HEK293 (cell line): ENCODE measurements at regions of chr15 and their contacts with region 1.

Region 1: GRCh38 chr15:84616235-84616634 is 15.4 kb downstream of the ZSCAN2 start:
- H3K4me3 ChIP-seq: no peak overlapping the region
- H3K27ac ChIP-seq: no peak overlapping the region
- H3K4me1 ChIP-seq: no peaks in the 10 kb centered on the region
- CTCF ChIP-seq: no peak

Region 2: DNA sequence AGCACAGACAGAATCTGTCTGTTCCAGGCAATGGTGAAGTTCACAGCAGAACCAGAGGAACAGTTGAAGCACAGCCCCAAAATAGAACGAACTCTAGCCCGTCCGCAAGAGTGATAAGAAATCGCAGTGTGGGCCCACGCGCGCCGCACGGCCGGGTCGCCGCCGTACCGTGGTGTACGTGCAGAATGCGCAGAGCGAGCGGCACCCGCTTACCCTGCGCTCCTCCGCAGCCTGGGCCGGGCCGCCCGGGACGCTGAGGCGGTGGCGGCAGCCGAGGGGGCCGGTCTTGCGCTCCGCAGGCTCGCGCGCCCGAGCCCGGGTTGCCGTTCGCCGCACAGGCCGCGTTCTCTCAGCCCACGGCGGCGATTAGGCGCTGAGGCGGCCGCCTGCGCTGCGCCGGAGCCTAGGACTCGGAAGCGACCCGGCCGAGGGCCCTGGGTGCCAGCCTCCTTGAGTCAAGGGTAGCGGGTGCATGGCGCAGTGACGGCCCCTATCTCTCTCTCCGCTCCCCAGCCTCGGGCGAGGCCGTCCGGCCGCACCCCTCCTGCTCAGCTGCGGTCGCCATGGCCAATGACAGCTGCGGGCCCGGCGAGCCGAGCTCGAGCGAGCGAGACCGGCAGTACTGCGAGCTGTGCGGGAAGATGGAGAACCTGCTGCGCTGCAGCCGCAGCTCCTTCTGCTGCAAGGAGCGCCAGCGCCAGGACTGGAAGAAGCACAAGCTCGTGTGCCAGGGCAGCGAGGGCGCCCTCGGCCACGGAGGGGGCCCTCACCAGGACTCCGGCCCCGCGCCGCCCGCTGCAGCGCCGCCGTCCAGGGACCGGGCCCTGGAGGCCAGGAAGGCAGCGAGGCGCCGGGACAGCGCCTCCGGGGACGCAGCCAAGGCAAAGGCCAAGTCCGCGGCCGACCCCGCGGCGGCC is 17.3 kb after region 1 on chr15:
- CTCF ChIA-PET with region 1: no interaction called
- POLR2A ChIA-PET with region 1: interaction called, 11 read pairs
- H3K4me3 ChIP-seq: peak overlapping the region; percentile 68
- H3K27ac ChIP-seq: peak overlapping the region; percentile 90
- H3K4me1 ChIP-seq: peaks cover 4% of the 10 kb centered on the region
- CTCF ChIP-seq: peak; percentile 36; the same call in 1 of the 2 replicates

Region 3: DNA sequence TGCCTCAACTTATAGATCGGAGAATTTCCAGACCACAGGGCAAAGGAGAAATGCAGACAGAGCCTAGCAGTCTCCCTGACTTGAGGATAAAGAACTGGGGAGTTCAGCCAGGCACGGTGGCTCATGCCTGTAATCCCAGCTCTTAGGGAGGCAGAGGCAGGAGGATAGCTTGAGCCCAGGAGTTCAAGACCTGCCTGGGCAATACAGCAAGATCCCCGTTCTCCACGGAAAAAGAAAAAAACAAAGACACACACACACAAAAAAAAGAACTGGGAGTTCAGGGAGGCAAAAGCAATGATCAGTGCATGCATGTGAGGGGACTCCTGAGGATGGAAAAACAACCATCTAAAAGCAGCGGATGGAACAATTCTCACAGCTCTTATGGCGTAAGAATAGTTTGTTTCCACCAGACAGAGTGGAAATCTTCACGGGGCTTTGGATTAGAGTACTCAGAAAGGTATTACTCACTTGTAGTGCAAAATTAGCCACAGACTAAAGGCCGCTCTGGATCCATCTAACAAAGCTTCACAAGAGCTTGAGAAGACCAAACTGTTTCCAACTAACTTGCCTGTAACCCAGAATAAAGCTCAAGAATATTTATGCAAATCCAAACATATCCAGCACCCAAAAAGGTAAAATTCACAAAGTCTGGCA is 83.4 kb after region 1 on chr15:
- CTCF ChIA-PET with region 1: no interaction called
- POLR2A ChIA-PET with region 1: no interaction called
- H3K4me3 ChIP-seq: no peak overlapping the region
- H3K27ac ChIP-seq: no peak overlapping the region
- H3K4me1 ChIP-seq: no peaks in the 10 kb centered on the region
- CTCF ChIP-seq: no peak

Region 4: DNA sequence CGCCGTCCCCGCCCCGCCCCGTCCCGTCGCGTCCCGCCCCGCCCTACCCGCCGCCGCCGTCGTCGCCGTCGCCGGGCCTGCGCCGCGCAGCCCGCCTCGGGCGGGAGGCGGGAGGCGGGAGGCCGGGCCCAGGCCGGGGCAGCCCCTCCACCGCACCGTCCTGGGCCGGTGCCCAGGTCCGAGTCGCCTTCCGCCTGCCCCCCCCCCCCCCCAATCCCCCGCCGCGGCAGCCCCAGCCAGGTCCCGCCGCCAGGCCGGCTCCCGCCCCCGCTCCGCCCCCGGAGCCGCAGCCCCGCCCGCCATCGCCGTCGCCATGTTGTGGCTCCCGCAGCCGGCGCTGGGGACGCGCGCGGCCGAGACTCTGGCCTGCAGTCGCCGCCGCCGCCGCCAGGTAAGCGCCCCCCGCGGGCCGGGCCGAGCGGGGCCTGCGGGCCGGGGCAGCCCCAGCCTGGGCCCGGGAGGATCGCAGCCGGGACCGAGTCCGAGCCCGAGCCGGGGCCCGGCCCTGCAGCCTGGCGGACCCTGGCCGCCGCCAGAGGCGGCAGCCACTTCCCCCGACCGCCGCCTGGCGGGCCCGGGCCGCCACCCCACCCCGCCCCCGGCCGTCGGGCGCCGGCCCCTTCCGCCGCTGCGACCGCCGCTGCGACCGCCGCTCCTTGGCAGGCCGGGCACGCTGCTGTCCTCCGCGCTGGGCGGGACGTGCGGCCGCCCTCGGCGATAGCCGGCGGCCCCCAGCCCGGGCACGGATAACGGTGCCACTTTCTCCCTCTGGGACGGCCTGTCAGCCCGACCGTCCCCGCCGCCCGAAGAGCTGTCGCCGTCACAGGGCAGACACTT is 132.3 kb after region 1 on chr15 and contains the start of gene ZNF592:
- CTCF ChIA-PET with region 1: no interaction called
- POLR2A ChIA-PET with region 1: interaction called, 10 read pairs
- H3K4me3 ChIP-seq: peak within 1 kb of the TSS; percentile 90
- H3K27ac ChIP-seq: peak within 1 kb of the TSS; percentile 95
- H3K4me1 ChIP-seq: peaks cover 19% of the 10 kb centered on the region
- CTCF ChIP-seq: no peak

Region 5: GRCh38 chr15:85104585-85104984 is 488.4 kb after region 1 on chr15:
- CTCF ChIA-PET with region 1: no interaction called
- POLR2A ChIA-PET with region 1: no interaction called
- H3K4me3 ChIP-seq: no peak overlapping the region
- H3K27ac ChIP-seq: no peak overlapping the region
- H3K4me1 ChIP-seq: no peaks in the 10 kb centered on the region
- CTCF ChIP-seq: no peak